GM12878 (cell line): ENCODE measurements at regions of chr1 and their contacts with region 1.

Region 1: DNA sequence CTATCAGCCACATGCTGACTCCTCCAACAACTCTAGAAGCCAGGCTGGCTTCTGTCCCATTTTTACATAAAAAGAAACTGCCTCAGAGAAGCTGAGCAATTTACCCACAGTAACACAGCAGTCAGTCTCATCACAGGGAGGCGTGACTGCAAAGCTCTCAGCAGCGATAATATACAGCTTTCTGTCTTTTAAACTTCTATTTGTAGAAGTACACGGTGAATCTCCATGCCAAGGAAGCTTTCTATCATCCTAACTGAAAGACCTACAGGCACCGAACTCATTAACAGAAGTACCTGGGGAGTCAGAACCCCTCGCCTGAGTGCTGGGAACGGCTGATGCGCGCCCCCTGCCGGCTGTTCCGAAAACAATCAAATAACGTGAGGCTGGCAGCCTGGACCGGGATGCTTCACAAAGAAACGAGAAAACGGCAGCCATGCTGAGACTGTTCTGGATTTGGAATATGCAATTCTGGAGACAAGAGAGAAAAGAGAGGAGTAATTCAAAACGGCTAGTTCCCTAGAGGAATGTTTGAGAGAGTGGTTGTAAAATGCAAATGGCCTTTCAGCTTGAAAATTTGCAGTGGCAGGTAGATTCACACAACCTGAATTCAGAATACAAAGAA is 43.5 kb upstream of the RAB4A start:
- DNase-seq: no peak
- ATAC-seq: peak; percentile 69
- H3K4me3 ChIP-seq: no peak overlapping the region
- H3K27ac ChIP-seq: no peak overlapping the region
- H3K4me1 ChIP-seq: peaks cover 7% of the 10 kb centered on the region; the same call in 1 of the 2 replicates
- H3K27me3 ChIP-seq: no peaks in the 10 kb centered on the region; a peak in 2 of 4 replicates
- CTCF ChIP-seq: peak; percentile 73 to 84 (median 78)
- EP300 ChIP-seq: no peak
- POLR2A ChIP-seq: no peak
- RAD21 ChIP-seq: peak; percentile 79

Region 2: GRCh38 chr1:228500901-228501871 is 726.2 kb before region 1 on chr1:
- CTCF ChIA-PET with region 1: interaction called, 12 read pairs
- POLR2A ChIA-PET with region 1: no interaction called
- RAD21 ChIA-PET with region 1: interaction called, 4 read pairs
- SMC1A ChIA-PET with region 1: interaction called, 3 read pairs
- in situ Hi-C with region 1: loop called (anchors 10 kb)
- intact Hi-C with region 1: no loop called
- DNase-seq: peak; percentile 78
- ATAC-seq: peak; percentile 98
- H3K4me3 ChIP-seq: no peak overlapping the region
- H3K27ac ChIP-seq: peak overlapping the region; percentile 52
- H3K4me1 ChIP-seq: peaks cover 19% of the 10 kb centered on the region
- H3K27me3 ChIP-seq: no peaks in the 10 kb centered on the region
- CTCF ChIP-seq: peak; percentile 91 to 96 (median 92)
- EP300 ChIP-seq: no peak
- POLR2A ChIP-seq: peak; percentile 3; the same call in 1 of the 2 replicates
- RAD21 ChIP-seq: peak; percentile 77

Region 3: DNA sequence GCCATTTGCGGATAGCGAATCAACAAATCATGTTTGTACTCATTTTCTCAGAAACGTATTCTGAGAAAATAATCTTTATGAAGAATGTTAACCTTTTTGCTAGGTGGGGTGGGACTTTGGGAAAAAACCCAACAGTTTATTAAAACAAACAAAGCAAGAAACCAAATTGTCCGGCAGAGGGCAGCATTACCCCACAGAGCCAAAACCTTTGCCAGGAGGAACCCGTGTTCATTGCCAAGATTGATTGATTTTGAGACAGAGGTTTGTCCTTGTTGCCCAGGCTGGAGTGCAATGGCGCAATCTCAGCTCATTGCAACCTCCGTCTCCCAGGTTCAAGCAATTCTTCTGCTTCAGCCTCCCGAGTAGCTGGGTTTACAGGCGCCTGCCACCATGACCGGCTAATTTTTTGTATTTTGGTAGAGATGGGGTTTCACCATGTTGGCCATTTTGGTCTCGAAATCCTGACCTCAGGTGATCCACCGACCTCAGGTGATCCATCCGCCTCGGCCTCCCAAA is 563.0 kb before region 1 on chr1:
- CTCF ChIA-PET with region 1: interaction called, 65 read pairs
- POLR2A ChIA-PET with region 1: no interaction called
- RAD21 ChIA-PET with region 1: interaction called, 17 read pairs
- SMC1A ChIA-PET with region 1: interaction called, 33 read pairs
- in situ Hi-C with region 1: no loop called
- intact Hi-C with region 1: loop called (anchors 1 kb)
- DNase-seq: no peak
- ATAC-seq: peak; percentile 56
- H3K4me3 ChIP-seq: no peak overlapping the region
- H3K27ac ChIP-seq: no peak overlapping the region
- H3K4me1 ChIP-seq: no peaks in the 10 kb centered on the region
- H3K27me3 ChIP-seq: no peaks in the 10 kb centered on the region
- CTCF ChIP-seq: peak; percentile 59 to 79 (median 64)
- EP300 ChIP-seq: no peak
- POLR2A ChIP-seq: no peak
- RAD21 ChIP-seq: peak; percentile 94

Region 4: DNA sequence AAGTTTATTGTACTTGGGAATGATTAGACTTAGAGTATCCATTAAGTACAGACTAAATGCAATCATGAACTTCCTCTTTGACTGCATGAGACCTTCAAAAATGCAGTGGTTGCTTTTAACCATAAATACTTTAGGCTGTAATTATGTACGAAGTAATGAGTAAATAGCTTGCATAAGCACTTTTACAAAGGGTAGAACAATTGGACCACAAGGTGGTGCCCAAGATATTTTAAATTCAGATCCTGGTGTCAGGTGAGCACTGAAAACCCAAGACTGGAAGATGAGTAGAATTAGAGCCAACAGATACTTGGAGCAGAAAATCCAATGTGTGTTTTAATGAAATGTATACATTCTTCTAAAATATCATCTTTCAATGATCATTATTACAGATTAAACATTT is 535.5 kb before region 1 on chr1:
- CTCF ChIA-PET with region 1: interaction called, 35 read pairs
- POLR2A ChIA-PET with region 1: no interaction called
- RAD21 ChIA-PET with region 1: interaction called, 8 read pairs
- SMC1A ChIA-PET with region 1: interaction called, 16 read pairs
- in situ Hi-C with region 1: no loop called
- intact Hi-C with region 1: loop called (anchors 1 kb)
- DNase-seq: no peak
- ATAC-seq: peak; percentile 64
- H3K4me3 ChIP-seq: no peak overlapping the region
- H3K27ac ChIP-seq: no peak overlapping the region
- H3K4me1 ChIP-seq: no peaks in the 10 kb centered on the region
- H3K27me3 ChIP-seq: no peaks in the 10 kb centered on the region
- CTCF ChIP-seq: peak; percentile 22 to 53 (median 25); a peak in 4 of 6 replicates
- EP300 ChIP-seq: no peak
- POLR2A ChIP-seq: no peak
- RAD21 ChIP-seq: peak; percentile 30; the same call in 1 of the 2 replicates

Region 5: DNA sequence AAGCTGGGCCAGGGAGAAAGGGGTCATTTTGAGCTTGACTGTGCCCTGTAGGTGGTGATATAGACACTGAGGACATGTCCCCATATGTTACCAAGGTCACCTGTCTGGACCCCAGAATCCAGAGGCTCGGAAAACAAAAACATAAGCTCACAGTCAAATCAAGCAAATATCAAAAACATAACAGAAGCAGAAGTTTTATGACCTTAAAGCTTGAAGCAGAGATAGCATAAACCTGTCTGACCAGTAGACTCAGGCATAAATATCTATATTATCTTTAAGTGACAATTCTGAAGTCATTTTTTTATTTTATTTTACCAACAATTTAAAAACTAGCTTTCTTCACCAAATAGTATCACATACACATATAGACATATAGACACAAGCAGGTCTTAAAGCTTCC is 525.0 kb before region 1 on chr1:
- CTCF ChIA-PET with region 1: interaction called, 15 read pairs
- POLR2A ChIA-PET with region 1: no interaction called
- RAD21 ChIA-PET with region 1: no interaction called
- SMC1A ChIA-PET with region 1: no interaction called
- in situ Hi-C with region 1: no loop called
- intact Hi-C with region 1: no loop called
- DNase-seq: no peak
- ATAC-seq: no peak
- H3K4me3 ChIP-seq: no peak overlapping the region
- H3K27ac ChIP-seq: no peak overlapping the region
- H3K4me1 ChIP-seq: no peaks in the 10 kb centered on the region
- H3K27me3 ChIP-seq: no peaks in the 10 kb centered on the region; a peak in 1 of 4 replicates
- CTCF ChIP-seq: no peak
- EP300 ChIP-seq: no peak
- POLR2A ChIP-seq: no peak
- RAD21 ChIP-seq: no peak

Region 6: DNA sequence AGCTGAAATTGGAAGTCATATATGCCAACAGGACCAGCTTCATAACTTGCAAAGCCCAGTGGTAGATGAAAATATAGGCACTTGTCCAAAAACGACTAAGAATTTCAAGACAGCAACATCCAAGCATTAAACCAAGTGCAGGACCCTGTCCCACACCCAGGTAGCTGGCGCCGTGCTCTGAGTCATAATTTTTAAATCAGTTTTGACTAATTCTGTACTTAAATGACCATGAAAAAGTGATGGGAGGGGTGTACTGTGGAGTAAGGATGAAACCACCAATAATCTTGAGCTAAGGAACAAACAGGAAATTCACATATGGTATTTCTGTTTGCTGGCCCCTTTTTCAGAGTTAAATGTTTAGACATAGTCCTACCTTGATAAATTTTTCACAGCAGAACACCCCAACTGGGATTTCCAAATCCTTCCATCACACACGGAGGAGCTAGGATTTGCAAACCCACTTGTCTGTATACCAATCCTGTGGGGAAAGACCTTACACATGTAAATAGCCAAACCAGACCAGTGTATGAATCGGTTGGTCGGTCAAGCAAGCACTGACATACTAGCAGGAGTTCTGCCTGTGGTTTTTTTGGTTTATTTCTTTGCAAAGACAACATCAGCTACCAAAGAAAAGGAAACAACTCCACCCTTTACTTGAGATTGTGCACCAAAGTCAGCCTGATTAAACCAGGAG is 192.2 kb before region 1 on chr1:
- CTCF ChIA-PET with region 1: no interaction called
- POLR2A ChIA-PET with region 1: no interaction called
- RAD21 ChIA-PET with region 1: no interaction called
- SMC1A ChIA-PET with region 1: no interaction called
- in situ Hi-C with region 1: no loop called
- intact Hi-C with region 1: loop called (anchors 10 kb)
- DNase-seq: peak; percentile 66
- ATAC-seq: peak; percentile 94
- H3K4me3 ChIP-seq: no peak overlapping the region
- H3K27ac ChIP-seq: no peak overlapping the region
- H3K4me1 ChIP-seq: peaks cover 7% of the 10 kb centered on the region
- H3K27me3 ChIP-seq: no peaks in the 10 kb centered on the region; a peak in 2 of 4 replicates
- CTCF ChIP-seq: no peak
- EP300 ChIP-seq: no peak; a peak in 1 of 4 replicates
- POLR2A ChIP-seq: no peak
- RAD21 ChIP-seq: no peak

Region 7: GRCh38 chr1:229086091-229086490 is 141.3 kb before region 1 on chr1:
- CTCF ChIA-PET with region 1: no interaction called
- POLR2A ChIA-PET with region 1: no interaction called
- RAD21 ChIA-PET with region 1: no interaction called
- SMC1A ChIA-PET with region 1: no interaction called
- in situ Hi-C with region 1: no loop called
- intact Hi-C with region 1: no loop called
- DNase-seq: no peak
- ATAC-seq: no peak
- H3K4me3 ChIP-seq: no peak overlapping the region
- H3K27ac ChIP-seq: no peak overlapping the region
- H3K4me1 ChIP-seq: no peaks in the 10 kb centered on the region
- H3K27me3 ChIP-seq: no peaks in the 10 kb centered on the region; a peak in 2 of 4 replicates
- CTCF ChIP-seq: no peak
- EP300 ChIP-seq: no peak
- POLR2A ChIP-seq: no peak
- RAD21 ChIP-seq: no peak

Region 8: GRCh38 chr1:229164836-229165735 is 62.3 kb before region 1 on chr1:
- CTCF ChIA-PET with region 1: no interaction called
- POLR2A ChIA-PET with region 1: no interaction called
- RAD21 ChIA-PET with region 1: no interaction called
- SMC1A ChIA-PET with region 1: no interaction called
- in situ Hi-C with region 1: no loop called
- intact Hi-C with region 1: no loop called
- DNase-seq: no peak
- ATAC-seq: peak; percentile 74
- H3K4me3 ChIP-seq: no peak overlapping the region
- H3K27ac ChIP-seq: no peak overlapping the region
- H3K4me1 ChIP-seq: no peaks in the 10 kb centered on the region; the same call in 1 of the 2 replicates
- H3K27me3 ChIP-seq: no peaks in the 10 kb centered on the region; a peak in 1 of 4 replicates
- CTCF ChIP-seq: no peak
- EP300 ChIP-seq: no peak
- POLR2A ChIP-seq: no peak
- RAD21 ChIP-seq: no peak

Region 9: DNA sequence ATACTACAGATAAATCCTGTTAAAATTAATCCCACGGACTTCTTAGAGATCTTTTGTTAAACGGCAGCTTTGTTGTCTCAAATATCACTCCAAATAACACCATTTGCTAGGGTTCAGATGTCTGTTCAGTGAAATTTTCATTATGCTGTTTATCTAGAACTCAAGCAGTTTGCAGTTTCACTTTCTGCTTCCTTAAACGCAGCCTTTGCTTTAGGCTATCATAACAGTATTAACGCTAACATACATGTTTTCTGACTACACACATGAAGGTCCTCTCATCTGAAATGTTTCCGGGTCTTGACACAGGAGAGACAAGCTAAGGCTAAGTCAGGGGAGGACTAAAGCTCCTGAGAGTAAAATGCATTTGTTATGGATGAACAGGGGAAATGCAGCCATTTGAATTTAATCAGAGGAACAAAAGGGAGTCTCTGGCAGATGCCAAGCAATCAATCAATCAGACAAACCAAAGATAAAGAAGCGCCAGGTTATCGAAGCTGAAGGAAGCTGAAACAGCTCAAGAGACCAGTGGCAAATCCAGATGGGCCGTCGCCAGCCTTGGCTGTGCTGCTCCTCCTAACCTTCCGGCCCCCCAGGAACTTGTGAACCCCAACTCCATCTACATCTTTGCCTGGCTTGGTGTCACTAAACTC is 98.6 kb after region 1 on chr1:
- CTCF ChIA-PET with region 1: no interaction called
- POLR2A ChIA-PET with region 1: no interaction called
- RAD21 ChIA-PET with region 1: no interaction called
- SMC1A ChIA-PET with region 1: no interaction called
- in situ Hi-C with region 1: no loop called
- intact Hi-C with region 1: no loop called
- DNase-seq: no peak
- ATAC-seq: no peak
- H3K4me3 ChIP-seq: no peak overlapping the region
- H3K27ac ChIP-seq: no peak overlapping the region
- H3K4me1 ChIP-seq: peaks cover 26% of the 10 kb centered on the region
- H3K27me3 ChIP-seq: no peaks in the 10 kb centered on the region
- CTCF ChIP-seq: no peak
- EP300 ChIP-seq: no peak
- POLR2A ChIP-seq: no peak
- RAD21 ChIP-seq: no peak

Region 10: GRCh38 chr1:229420765-229421164 is 193.4 kb after region 1 on chr1:
- CTCF ChIA-PET with region 1: no interaction called
- POLR2A ChIA-PET with region 1: no interaction called
- RAD21 ChIA-PET with region 1: no interaction called
- SMC1A ChIA-PET with region 1: no interaction called
- in situ Hi-C with region 1: no loop called
- intact Hi-C with region 1: no loop called
- DNase-seq: no peak
- ATAC-seq: peak; percentile 48
- H3K4me3 ChIP-seq: no peak overlapping the region
- H3K27ac ChIP-seq: no peak overlapping the region
- H3K4me1 ChIP-seq: no peaks in the 10 kb centered on the region
- H3K27me3 ChIP-seq: peaks cover 0 to 5% of the 10 kb centered on the region in 2 experiments; a peak in 1 of 4 replicates
- CTCF ChIP-seq: peak in 1 of 3 experiments; percentile 14; a peak in 2 of 6 replicates
- EP300 ChIP-seq: no peak
- POLR2A ChIP-seq: no peak
- RAD21 ChIP-seq: no peak